OCI-LY7 (cell line): ENCODE measurements at regions of chr15 and their contacts with region 1.

Region 1: DNA sequence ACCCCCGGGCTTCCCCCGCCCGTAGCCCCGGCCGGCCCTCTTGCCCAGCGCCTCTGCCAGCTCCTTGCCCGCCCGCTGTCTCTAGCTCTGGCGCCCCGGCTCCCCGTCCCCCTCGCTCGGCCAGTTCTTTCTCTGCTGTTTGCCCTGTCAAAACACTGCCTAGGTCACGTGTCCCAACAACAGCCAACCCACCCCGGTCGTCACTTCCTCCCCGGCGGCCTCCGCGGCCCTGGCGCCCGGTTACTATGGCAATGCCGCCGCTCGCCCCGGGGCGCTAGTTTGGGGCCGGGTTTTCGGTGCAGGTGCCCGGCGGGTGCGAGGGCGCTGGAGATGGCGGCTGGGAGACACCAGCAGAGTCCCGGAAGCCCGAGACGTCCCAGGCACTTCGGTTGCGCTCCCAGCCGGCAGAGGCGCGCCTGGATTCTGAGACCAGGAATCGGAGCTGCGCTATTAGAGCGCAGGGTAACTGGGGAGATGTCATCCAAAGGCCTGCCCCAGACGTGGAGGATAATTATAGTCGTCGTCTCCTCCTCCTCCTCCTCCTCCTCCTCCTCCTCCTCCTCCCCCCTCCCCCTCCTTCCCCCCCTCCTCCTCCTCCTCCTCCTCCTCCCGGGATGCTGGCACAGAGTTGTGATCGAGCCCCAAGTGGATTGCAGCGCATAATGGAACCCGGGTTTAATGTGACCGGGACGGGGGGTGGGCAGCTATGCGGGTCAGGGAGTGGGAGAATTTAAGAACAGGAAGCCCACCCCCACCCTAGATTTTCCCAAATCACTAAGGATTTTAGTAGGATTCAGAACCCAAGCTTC is at the start of gene ATOSA:
- DNase-seq: peak; percentile 93
- H3K4me3 ChIP-seq: peak within 1 kb of the TSS; percentile 80
- H3K27ac ChIP-seq: peak within 1 kb of the TSS; percentile 99
- H3K4me1 ChIP-seq: peaks cover 71% of the 10 kb centered on the region
- CTCF ChIP-seq: no peak; the same call in 1 of the 2 replicates
- total RNA-seq, gene ATOSA: 28.5 and 34.1 TPM in 2 replicates

Region 2: GRCh38 chr15:52217186-52217585 is 462.2 kb before region 1 on chr15:
- CTCF ChIA-PET with region 1: no interaction called
- POLR2A ChIA-PET with region 1: interaction called, 6 read pairs
- intact Hi-C with region 1: loop called (anchors 2 kb)
- DNase-seq: peak; percentile 81
- H3K4me3 ChIP-seq: no peak overlapping the region
- H3K27ac ChIP-seq: peak overlapping the region; percentile 97
- H3K4me1 ChIP-seq: peaks cover 49% of the 10 kb centered on the region
- CTCF ChIP-seq: peak; percentile 90

Region 3: DNA sequence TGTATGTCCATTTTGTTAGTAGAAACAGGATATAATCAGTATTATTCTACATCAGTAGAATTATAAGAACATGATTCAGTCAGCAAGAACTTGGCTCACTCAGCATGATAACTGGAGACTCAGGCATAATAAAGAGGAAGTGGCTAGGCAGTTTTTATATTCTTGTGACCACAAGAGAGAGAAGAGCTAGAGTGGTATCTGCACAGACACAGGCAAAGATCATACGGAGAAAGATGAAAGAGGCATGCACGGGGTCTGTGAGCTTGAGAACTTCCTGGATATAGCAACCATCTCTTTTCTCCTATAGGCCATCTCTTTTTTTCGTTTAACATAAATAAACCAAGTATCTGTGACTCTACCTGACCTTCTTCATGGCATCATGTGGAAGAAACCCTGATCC is 197.5 kb before region 1 on chr15:
- CTCF ChIA-PET with region 1: no interaction called
- POLR2A ChIA-PET with region 1: no interaction called
- intact Hi-C with region 1: loop called (anchors 5 kb)
- DNase-seq: peak; percentile 94
- H3K4me3 ChIP-seq: peak overlapping the region; percentile 55
- H3K27ac ChIP-seq: peak overlapping the region; percentile 93
- H3K4me1 ChIP-seq: peaks cover 57% of the 10 kb centered on the region
- CTCF ChIP-seq: no peak

Region 4: DNA sequence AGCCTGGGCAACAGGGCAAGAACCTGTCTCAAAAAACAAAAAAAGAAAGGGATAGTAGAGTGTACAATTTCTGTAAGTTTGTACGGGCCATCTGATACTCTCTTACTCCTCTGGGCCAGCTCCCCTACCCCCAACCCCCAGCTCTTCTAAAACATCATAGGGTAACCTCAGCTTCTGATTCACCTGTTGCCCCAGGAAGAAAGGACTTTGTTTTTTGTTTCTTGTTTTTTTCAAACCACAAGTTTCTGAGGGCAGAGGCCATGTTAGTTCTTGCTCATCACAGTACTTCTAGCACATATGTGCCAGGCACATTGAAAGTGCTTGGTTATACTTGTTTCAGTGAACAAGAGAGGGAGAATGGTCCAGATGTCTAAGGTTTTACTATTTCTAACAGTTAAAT is 20.5 kb before region 1 on chr15:
- CTCF ChIA-PET with region 1: no interaction called
- POLR2A ChIA-PET with region 1: interaction called, 19 read pairs
- intact Hi-C with region 1: no loop called
- DNase-seq: no peak
- H3K4me3 ChIP-seq: no peak overlapping the region
- H3K27ac ChIP-seq: no peak overlapping the region
- H3K4me1 ChIP-seq: no peaks in the 10 kb centered on the region
- CTCF ChIP-seq: no peak

Region 5: GRCh38 chr15:52709190-52709981 is 29.9 kb after region 1 on chr15:
- CTCF ChIA-PET with region 1: interaction called, 7 read pairs
- POLR2A ChIA-PET with region 1: interaction called, 76 read pairs
- intact Hi-C with region 1: loop called (anchors 1 kb)
- DNase-seq: peak; percentile 91
- H3K4me3 ChIP-seq: peak overlapping the region; percentile 73
- H3K27ac ChIP-seq: peak overlapping the region; percentile 90
- H3K4me1 ChIP-seq: peaks cover 47% of the 10 kb centered on the region
- CTCF ChIP-seq: no peak